ENCODE measurements at regions of chr5 and their contacts with region 1.

Region 1: GRCh38 chr5:113612060-113612496 is 98.6 kb downstream of the YTHDC2 start:
- H3K4me3 Mint-ChIP-seq: no peak overlapping the region
- H3K27ac Mint-ChIP-seq: no peak overlapping the region
- H3K4me1 Mint-ChIP-seq: peaks cover 8% of the 10 kb centered on the region
- H3K27me3 Mint-ChIP-seq: peaks cover 8% of the 10 kb centered on the region

Region 2: DNA sequence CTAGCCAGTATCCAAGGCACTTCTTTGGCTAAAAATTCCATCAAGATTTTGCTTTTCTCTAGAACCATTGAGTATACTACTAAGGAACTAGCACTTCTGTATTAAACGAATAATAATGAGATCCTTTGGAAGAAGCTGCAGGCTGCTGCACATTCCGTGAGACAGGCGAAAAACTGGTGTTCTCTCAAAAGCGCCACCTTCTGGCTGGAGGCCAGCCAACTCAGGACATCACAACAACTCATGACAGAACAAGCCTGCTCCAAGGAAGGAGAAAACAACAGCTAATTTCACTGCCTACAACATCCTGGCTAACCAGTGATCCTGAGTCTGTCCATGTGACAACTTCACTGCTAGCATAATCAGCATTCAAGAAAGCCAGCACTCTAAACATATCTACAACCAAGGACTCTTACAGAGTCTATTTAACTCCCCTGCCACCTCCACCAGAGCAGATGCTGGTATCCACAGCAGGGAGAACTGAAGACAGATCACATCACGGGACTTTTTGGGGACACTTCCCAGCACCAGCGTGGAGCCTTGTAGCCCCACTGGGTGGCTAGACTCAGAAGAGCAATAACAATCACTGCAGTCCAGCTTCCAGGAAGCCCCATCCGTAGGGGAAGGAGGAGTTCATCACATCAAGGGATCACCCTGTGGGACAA is 51.9 kb after region 1 on chr5:
- intact Hi-C with region 1: loop called (anchors 1 kb)
- H3K4me3 Mint-ChIP-seq: no peak overlapping the region
- H3K27ac Mint-ChIP-seq: no peak overlapping the region
- H3K4me1 Mint-ChIP-seq: no peaks in the 10 kb centered on the region
- H3K27me3 Mint-ChIP-seq: peaks cover 2% of the 10 kb centered on the region

Region 3: GRCh38 chr5:114678778-114679177 is 1066.7 kb after region 1 on chr5:
- intact Hi-C with region 1: no loop called
- H3K4me3 Mint-ChIP-seq: no peak overlapping the region
- H3K27ac Mint-ChIP-seq: no peak overlapping the region
- H3K4me1 Mint-ChIP-seq: no peaks in the 10 kb centered on the region
- H3K27me3 Mint-ChIP-seq: no peaks in the 10 kb centered on the region

Region 4: DNA sequence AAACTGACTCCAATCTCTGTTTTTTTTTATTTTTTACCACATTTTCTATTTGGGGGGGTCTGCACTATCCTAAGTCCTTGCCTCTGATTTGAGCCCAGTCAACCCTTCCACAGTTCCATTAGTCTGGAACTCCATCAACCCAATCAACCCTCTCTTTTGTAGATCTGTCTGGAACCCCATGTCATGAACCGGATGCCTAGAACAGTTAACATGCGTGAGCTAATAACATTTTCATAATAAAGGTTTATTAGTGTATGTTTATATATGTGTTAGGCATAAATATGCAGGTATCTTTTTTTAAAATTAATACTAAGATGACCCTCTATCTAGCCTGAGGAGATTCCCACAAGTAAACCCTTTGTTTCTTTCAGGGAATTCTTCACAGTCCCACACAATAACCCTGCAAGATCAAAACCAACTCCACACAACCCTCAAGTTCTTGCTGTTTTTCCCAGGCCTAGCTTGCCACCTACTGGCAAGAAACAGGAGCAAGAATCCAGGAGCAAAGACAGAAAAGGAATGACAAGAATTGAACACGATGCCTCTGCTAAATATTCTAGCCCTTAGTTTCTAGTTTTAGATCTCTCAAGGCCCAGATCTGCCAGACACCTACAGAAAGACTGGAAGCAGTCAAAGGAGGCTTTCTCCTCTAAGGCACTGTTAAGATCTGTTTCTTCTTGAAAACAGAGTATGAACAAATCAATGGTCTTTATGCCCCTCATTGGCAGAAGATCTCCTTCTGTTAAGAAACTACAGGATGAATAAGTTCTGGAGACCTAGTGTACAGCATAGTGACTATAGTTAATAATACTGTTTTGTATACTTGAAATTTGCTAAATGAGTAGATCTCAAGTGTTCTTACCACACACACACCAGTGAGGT is 1457.2 kb after region 1 on chr5:
- intact Hi-C with region 1: loop called (anchors 10 kb)
- H3K4me3 Mint-ChIP-seq: no peak overlapping the region
- H3K27ac Mint-ChIP-seq: no peak overlapping the region
- H3K4me1 Mint-ChIP-seq: no peaks in the 10 kb centered on the region
- H3K27me3 Mint-ChIP-seq: peaks cover 15% of the 10 kb centered on the region

Region 5: DNA sequence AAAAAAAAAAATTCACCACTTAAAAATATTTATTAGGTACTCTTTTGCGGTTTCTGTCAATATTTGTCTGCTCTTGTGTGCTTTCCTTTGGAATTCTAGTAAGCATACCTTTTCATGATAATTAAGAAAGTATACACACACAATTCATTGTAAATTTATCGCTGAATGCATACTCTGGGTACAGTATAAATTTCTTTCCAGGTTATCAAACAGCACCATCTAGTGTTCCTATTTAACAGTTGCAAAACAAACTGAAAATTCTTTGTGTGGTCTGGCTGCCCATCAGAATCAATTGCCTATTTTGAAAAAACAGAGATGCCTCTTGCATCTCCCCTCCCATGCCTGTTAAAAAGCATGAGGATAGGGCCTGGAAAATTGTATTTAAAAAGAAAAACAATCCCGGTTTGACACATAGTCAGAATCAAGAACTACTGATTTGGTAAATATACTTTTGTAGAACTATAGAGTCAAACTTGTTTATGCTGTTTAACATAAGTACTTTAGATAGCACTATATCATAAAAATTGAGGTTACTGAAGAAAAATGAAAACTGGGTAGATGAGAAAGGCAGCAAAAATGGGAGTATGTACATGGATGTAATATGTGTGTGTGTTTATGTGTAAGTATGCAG is 1634.4 kb after region 1 on chr5:
- intact Hi-C with region 1: loop called (anchors 5 kb)
- H3K4me3 Mint-ChIP-seq: no peak overlapping the region
- H3K27ac Mint-ChIP-seq: no peak overlapping the region
- H3K4me1 Mint-ChIP-seq: peaks cover 36% of the 10 kb centered on the region
- H3K27me3 Mint-ChIP-seq: no peaks in the 10 kb centered on the region